ENCODE measurements at regions of chr1 and their contacts with region 1.

Region 1: DNA sequence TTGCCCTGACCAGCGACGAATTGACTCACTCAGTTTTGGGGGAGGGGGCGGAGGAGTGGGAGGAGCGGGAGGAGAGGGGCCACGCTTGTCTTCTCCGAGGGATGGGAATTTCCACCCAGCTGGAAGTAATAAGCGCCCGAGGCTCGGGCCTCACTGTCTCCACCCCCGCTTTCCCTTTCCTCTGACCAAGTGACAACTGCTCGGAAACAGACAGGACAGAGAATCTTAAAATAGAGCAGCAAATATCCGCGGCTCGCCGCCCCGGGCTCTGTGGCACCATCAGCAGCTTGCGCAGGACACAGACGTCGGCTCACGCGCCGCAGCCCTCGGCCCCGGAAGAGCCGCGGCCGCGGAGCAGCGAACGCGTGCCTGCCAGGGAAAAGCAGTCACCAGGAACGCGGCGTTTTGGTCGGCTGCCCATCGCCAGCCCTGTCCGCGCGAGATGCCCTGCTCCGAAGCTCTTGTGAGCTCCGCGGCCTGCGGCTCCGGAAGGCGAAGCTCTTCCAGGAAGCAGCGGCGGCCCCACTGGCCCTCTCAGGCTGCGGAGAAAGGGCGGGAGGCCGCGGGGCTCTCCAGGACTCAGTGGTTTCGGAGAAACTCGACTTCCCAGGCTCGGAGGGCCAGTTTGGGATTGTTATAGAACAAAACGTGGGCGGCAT is 10.7 kb upstream of the RGS16 start:
- DNase-seq: peak; percentile 34
- H3K4me3 Mint-ChIP-seq: peak overlapping the region; percentile 81
- H3K27ac Mint-ChIP-seq: peak overlapping the region; percentile 88
- H3K4me1 Mint-ChIP-seq: peaks cover 89% of the 10 kb centered on the region
- H3K27me3 Mint-ChIP-seq: peaks cover 16% of the 10 kb centered on the region

Region 2: GRCh38 chr1:181014477-181015250 is 1600.3 kb before region 1 on chr1:
- intact Hi-C with region 1: loop called (anchors 10 kb)
- DNase-seq: no peak
- H3K4me3 Mint-ChIP-seq: no peak overlapping the region
- H3K27ac Mint-ChIP-seq: no peak overlapping the region
- H3K4me1 Mint-ChIP-seq: peaks cover 44% of the 10 kb centered on the region
- H3K27me3 Mint-ChIP-seq: no peaks in the 10 kb centered on the region

Region 3: DNA sequence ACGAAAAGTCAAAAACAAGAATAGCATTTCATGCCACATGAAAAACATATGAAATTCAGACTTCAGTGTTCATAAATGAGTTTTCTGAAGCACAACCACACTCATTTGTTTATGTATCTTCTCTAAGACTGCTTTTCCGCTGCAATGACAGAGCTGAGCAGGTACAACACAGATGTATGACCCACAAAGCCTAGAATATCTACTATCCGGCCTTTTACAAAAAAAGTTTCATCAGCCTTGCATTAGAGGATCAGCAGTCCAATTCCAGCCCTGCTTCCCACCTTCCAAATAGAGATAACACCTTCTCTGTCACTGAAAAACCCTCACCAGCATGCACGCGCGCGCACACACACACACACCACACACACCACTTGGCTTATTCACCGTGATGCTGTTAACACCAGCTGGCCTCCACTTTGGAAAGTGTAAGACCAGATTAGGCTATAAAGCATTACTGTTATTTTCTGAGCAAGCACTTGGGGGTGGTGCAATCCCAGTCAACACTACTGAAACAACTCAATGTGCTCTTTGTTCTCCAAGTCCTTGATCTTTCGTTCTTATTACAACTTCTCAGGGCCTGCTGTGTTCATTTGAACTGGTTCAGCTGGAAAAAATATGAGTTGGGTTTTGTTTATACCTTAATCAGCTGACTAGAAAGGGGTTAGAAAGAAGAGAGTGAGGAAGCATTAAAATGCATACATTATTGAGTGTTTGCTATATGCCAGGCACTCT is 313.3 kb before region 1 on chr1:
- intact Hi-C with region 1: loop called (anchors 5 kb)
- DNase-seq: peak; percentile 9
- H3K4me3 Mint-ChIP-seq: peak overlapping the region; percentile 37
- H3K27ac Mint-ChIP-seq: peak overlapping the region; percentile 88
- H3K4me1 Mint-ChIP-seq: peaks cover 51% of the 10 kb centered on the region
- H3K27me3 Mint-ChIP-seq: no peaks in the 10 kb centered on the region

Region 4: GRCh38 chr1:182629499-182630096 is 14.7 kb after region 1 on chr1:
- intact Hi-C with region 1: loop called (anchors 1 kb)
- DNase-seq: peak; percentile 30
- H3K4me3 Mint-ChIP-seq: peak overlapping the region; percentile 46
- H3K27ac Mint-ChIP-seq: peak overlapping the region; percentile 85
- H3K4me1 Mint-ChIP-seq: peaks cover 88% of the 10 kb centered on the region
- H3K27me3 Mint-ChIP-seq: peaks cover 9% of the 10 kb centered on the region

Region 5: GRCh38 chr1:182707122-182707521 is 92.2 kb after region 1 on chr1:
- intact Hi-C with region 1: loop called (anchors 1 kb)
- DNase-seq: no peak
- H3K4me3 Mint-ChIP-seq: no peak overlapping the region
- H3K27ac Mint-ChIP-seq: no peak overlapping the region
- H3K4me1 Mint-ChIP-seq: peaks cover 28% of the 10 kb centered on the region
- H3K27me3 Mint-ChIP-seq: peaks cover 2% of the 10 kb centered on the region

Region 6: GRCh38 chr1:182716740-182717720 is 102.1 kb after region 1 on chr1:
- intact Hi-C with region 1: loop called (anchors 1 kb)
- DNase-seq: no peak
- H3K4me3 Mint-ChIP-seq: no peak overlapping the region
- H3K27ac Mint-ChIP-seq: peak overlapping the region; percentile 3
- H3K4me1 Mint-ChIP-seq: peaks cover 63% of the 10 kb centered on the region
- H3K27me3 Mint-ChIP-seq: no peaks in the 10 kb centered on the region

Region 7: GRCh38 chr1:182781841-182782586 is 167.1 kb after region 1 on chr1:
- intact Hi-C with region 1: loop called (anchors 1 kb)
- DNase-seq: peak; percentile 52
- H3K4me3 Mint-ChIP-seq: no peak overlapping the region
- H3K27ac Mint-ChIP-seq: no peak overlapping the region
- H3K4me1 Mint-ChIP-seq: peaks cover 30% of the 10 kb centered on the region
- H3K27me3 Mint-ChIP-seq: peaks cover 4% of the 10 kb centered on the region

Measured in activated T-helper 1 cell treated with anti-CD3 and anti-CD28 coated beads, Interleukin-12 subunit alpha, Interleukin-12 subunit beta, Interleukin-2, Interleukin-4 antibody, amounts not matched to agents 30 ng/mL and 10 ng/mL and 1 ng/mL, durations not matched to agents 14 hours and 24 hours and 36 hours (primary cell).